ENCODE measurements at regions of chr3 and their contacts with region 1.

Region 1: DNA sequence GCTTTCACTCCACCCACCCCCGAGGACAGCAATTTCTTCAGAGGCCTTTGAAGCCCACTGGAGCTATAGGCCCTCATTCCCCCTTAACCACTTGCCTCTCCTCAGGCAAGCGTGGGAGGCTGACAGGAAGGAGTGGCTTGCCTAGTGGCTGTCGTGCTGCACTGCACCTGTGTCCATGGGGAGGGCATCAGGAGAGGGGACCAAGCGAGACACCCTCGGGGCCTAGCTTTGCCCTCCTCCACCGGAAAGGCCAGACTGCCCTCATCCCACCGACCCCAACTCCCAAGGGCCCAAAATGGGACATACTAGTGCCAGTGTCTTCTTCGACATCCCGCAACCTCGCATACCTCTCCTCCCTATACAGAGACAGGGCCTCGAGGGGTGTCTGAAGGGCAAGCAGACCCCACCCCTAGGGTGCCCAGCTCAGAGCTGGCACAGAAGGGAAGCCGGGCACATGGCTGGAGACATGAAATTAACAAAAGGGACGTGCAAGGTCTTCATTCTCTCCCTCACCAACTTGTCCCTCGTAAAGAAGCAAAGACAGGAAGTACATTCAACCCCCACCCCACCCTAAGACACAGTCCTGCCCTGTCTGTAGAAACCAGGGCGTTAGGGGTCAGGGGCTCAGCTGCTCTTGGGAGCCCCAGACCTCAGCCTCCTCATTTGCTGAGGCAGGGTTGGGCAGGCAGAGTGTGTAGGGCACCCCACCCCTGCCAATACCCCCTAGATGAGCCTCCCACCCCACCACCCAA is 24.3 kb downstream of the VIPR1 start:
- DNase-seq: no peak
- ATAC-seq: no peak
- H3K4me3 ChIP-seq: no peak overlapping the region
- H3K27ac ChIP-seq: no peak overlapping the region
- H3K4me1 ChIP-seq: no peaks in the 10 kb centered on the region
- H3K27me3 ChIP-seq: no peaks in the 10 kb centered on the region
- CTCF ChIP-seq: no peak

Region 2: DNA sequence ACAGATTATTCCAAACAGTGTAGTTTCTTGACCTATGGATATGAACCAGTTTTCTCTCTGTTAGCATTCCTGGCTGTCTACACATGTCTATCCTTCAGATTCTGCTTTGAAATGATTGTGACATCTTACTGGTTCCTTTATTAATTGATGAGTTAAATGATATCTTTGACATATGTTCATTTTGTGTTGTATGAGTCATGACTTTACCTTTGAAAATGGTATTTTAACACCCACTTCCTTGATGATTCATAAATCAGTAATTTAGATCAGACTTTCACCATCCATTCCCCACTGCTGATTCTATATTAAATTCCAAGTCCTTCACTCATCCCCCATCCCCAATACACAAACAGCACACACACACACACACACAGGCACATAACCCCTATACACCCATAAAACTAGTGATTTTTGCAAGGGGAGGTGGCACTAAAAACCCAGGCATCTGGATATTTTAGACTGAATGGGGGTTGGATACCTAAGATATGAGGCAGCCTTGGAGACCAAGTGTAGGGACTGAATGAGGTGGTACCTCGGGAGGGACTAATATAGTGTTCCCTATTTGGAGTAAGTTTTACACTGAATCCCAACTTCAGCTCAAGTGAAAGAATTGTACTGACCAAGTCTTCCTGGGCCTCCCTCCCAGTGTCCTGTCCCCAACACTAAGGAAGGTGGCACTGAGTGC is 270.5 kb before region 1 on chr3:
- intact Hi-C with region 1: loop called in 1 of 3 experiments (anchors 10 kb)
- DNase-seq: no peak
- ATAC-seq: peak in 1 of 4 donors; percentile 29
- H3K4me3 ChIP-seq: no peak overlapping the region
- H3K27ac ChIP-seq: no peak overlapping the region
- H3K4me1 ChIP-seq: no peaks in the 10 kb centered on the region
- H3K27me3 ChIP-seq: peaks cover 0 to 7% (median 0%) of the 10 kb centered on the region in 4 donors
- CTCF ChIP-seq: no peak